OCI-LY7 (cell line): ENCODE measurements at regions of chr6 and their contacts with region 1.

Region 1: GRCh38 chr6:16183187-16183664 is 54.3 kb downstream of the MYLIP start:
- DNase-seq: peak; percentile 61
- H3K4me3 ChIP-seq: no peak overlapping the region
- H3K27ac ChIP-seq: no peak overlapping the region
- H3K4me1 ChIP-seq: peaks cover 7% of the 10 kb centered on the region
- CTCF ChIP-seq: peak; percentile 86

Region 2: DNA sequence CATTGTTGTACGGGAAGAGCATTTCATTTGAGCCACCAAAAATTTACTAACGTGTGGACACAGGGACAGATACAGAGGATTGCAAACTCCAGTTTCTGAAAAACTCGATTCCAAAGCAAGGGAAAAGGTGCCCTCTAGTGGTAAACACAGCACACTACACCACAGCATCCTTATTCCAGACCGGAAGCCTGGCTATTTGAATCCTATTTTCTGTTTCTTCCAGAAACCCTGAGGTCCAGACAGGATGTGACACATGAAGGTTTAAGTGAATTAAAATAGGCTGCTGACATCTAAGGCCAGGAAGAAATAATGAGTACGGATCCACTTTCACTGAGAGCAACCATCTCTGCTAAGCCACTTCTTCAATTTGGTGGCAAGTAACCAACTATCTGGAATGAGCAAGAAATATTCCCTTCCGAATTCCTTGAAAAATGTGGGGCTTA is 23.4 kb after region 1 on chr6:
- CTCF ChIA-PET with region 1: interaction called, 6 read pairs
- POLR2A ChIA-PET with region 1: interaction called, 4 read pairs
- intact Hi-C with region 1: loop called (anchors 1 kb)
- DNase-seq: peak; percentile 75
- H3K4me3 ChIP-seq: peak overlapping the region; percentile 27
- H3K27ac ChIP-seq: peak overlapping the region; percentile 87
- H3K4me1 ChIP-seq: peaks cover 28% of the 10 kb centered on the region
- CTCF ChIP-seq: peak; percentile 99